Aorta (tissue), 5 donors: ENCODE measurements at regions of chr19 and their contacts with region 1.

Region 1: GRCh38 chr19:38831142-38831605 is 420 bp downstream of the ECH1 start:
- DNase-seq: peak; percentile 81 to 88
- ATAC-seq: peak; percentile 64
- H3K4me3 ChIP-seq: peak overlapping the region; percentile 42 to 43
- H3K27ac ChIP-seq: peak overlapping the region in 1 of 2 donors; percentile 78
- H3K4me1 ChIP-seq: peaks cover 0 to 2% of the 10 kb centered on the region in 2 donors
- H3K27me3 ChIP-seq: no peaks in the 10 kb centered on the region

Region 2: GRCh38 chr19:38658462-38659306 is 172.5 kb before region 1 on chr19:
- intact Hi-C with region 1: loop called in 1 of 2 experiments (anchors 10 kb)
- DNase-seq: no peak
- ATAC-seq: peak; percentile 76
- H3K4me3 ChIP-seq: no peak overlapping the region
- H3K27ac ChIP-seq: peak overlapping the region; percentile 92 to 99
- H3K4me1 ChIP-seq: peaks cover 9 to 22% of the 10 kb centered on the region in 2 donors
- H3K27me3 ChIP-seq: no peaks in the 10 kb centered on the region

Region 3: GRCh38 chr19:39038098-39038497 is 206.9 kb after region 1 on chr19:
- intact Hi-C with region 1: no loop called
- DNase-seq: no peak
- ATAC-seq: no peak
- H3K4me3 ChIP-seq: no peak overlapping the region
- H3K27ac ChIP-seq: no peak overlapping the region
- H3K4me1 ChIP-seq: no peaks in the 10 kb centered on the region
- H3K27me3 ChIP-seq: no peaks in the 10 kb centered on the region